CD4-positive, alpha-beta memory T cell (primary cell): ENCODE measurements at regions of chr9 and their contacts with region 1.

Region 1: DNA sequence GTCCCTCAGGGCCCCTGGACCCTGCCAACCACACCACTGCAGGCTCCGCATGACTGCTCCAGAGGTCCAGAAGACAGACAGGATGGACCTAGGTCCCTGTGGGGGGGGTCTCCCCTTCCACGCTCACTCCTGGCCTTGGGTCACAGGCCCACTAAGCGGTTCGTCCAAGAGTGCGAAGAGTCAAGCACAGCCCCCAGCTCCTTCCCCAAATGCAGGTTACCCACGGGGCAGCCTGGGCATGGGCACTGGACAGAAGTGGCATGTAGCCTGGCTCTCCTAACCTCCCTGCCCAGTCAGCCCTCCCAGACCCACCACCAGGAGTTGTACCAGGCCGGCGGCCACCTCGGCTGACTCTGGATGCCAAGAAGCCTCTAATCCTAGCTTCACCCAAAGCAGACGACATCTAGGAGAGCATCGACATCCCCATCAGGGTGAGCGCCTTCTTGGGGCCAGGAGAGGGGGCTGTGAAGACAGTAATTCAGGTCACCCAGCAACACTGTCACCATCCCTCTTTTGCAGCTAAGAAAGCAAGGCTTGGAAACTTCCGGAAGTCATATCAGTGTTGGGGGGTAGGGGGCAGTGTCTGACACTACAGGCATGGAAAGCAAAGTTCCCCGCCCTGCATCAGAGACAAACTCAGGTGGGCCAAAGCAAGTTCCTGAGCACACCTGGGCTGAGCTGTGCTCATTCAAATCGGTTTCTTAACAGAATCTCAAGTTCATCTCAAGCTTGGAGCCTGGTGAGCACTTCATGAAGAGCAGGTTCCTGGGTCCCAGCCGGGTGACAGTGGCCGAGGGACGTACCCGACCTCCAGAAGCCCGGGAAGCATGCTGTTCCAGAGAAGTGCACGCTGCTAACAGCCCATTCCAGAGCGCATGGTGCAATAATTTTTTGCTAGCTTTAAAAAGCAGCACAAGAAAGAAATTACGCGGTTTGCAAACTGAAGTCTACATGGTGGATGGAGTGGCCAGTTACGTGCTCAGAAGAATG is 68.7 kb downstream of the SEMA4D start:
- DNase-seq: peak; percentile 66 to 86 (median 73)
- H3K4me3 ChIP-seq: no peak overlapping the region
- H3K4me3 Mint-ChIP-seq: peak overlapping the region in 5 of 8 donors; percentile 17 to 73 (median 53)
- H3K27ac ChIP-seq: peak overlapping the region; percentile 4
- H3K27ac Mint-ChIP-seq: peak overlapping the region; percentile 50 to 97 (median 86)
- H3K4me1 ChIP-seq: peaks cover 100% of the 10 kb centered on the region
- H3K4me1 Mint-ChIP-seq: peaks cover 62 to 100% (median 85%) of the 10 kb centered on the region in 4 donors
- H3K27me3 ChIP-seq: no peaks in the 10 kb centered on the region
- H3K27me3 Mint-ChIP-seq: no peaks in the 10 kb centered on the region

Region 2: DNA sequence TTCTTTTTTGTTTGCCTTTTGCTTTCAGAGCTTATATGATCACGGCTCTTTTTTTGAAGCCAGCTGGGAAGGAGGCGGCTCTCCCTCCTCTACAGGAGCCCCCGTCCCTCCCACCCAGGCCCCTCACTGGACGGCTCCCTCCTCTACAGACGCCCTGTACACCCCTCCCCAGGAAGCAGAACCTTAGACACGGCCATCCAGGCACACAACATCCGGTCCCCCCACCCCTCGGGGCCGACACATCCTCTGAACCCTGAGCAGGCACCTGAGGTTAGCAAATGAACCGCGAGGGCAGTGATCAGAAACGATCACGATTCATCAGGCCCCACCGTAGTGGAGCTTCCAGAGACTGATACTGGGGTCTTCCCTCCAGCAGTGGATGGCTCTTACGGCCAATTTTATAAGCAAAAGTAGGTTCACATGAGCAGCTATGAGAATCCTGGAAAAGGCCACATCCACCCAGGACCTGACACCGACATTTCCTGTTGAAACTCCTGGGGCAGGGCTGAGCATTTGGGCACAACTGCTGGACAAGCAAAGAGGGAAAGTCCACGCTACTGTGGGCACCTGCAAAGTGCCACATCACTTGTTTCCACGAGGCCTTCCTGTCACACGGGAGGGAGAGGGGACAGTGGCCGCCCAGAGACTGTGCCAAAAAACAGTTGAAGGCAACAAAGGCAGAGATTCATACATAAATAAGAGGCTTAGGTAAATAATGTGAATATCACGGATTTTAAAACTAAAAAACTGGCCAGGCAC is 10.1 kb before region 1 on chr9:
- CTCF ChIA-PET with region 1: interaction called, 16 read pairs
- POLR2A ChIA-PET with region 1: interaction called, 13 read pairs
- intact Hi-C with region 1: no loop called
- DNase-seq: peak; percentile 69 to 86 (median 75)
- H3K4me3 ChIP-seq: peak overlapping the region in 1 of 2 donors; percentile 48
- H3K4me3 Mint-ChIP-seq: peak overlapping the region; percentile 81 to 94 (median 84)
- H3K27ac ChIP-seq: peak overlapping the region; percentile 73
- H3K27ac Mint-ChIP-seq: peak overlapping the region; percentile 83 to 97 (median 97)
- H3K4me1 ChIP-seq: peaks cover 100% of the 10 kb centered on the region
- H3K4me1 Mint-ChIP-seq: peaks cover 69 to 99% (median 80%) of the 10 kb centered on the region in 4 donors
- H3K27me3 ChIP-seq: no peaks in the 10 kb centered on the region
- H3K27me3 Mint-ChIP-seq: no peaks in the 10 kb centered on the region

Region 3: GRCh38 chr9:89448381-89448780 is 19.2 kb after region 1 on chr9:
- CTCF ChIA-PET with region 1: interaction called, 18 read pairs
- POLR2A ChIA-PET with region 1: interaction called, 7 read pairs
- intact Hi-C with region 1: no loop called
- DNase-seq: peak in 1 of 5 donors; percentile 65
- H3K4me3 ChIP-seq: peak overlapping the region in 1 of 2 donors; percentile 13
- H3K4me3 Mint-ChIP-seq: peak overlapping the region in 7 of 8 donors; percentile 35 to 90 (median 70)
- H3K27ac ChIP-seq: peak overlapping the region; percentile 49
- H3K27ac Mint-ChIP-seq: peak overlapping the region; percentile 86 to 97 (median 92)
- H3K4me1 ChIP-seq: peaks cover 97% of the 10 kb centered on the region
- H3K4me1 Mint-ChIP-seq: peaks cover 78 to 96% (median 88%) of the 10 kb centered on the region in 4 donors
- H3K27me3 ChIP-seq: no peaks in the 10 kb centered on the region
- H3K27me3 Mint-ChIP-seq: no peaks in the 10 kb centered on the region

Region 4: DNA sequence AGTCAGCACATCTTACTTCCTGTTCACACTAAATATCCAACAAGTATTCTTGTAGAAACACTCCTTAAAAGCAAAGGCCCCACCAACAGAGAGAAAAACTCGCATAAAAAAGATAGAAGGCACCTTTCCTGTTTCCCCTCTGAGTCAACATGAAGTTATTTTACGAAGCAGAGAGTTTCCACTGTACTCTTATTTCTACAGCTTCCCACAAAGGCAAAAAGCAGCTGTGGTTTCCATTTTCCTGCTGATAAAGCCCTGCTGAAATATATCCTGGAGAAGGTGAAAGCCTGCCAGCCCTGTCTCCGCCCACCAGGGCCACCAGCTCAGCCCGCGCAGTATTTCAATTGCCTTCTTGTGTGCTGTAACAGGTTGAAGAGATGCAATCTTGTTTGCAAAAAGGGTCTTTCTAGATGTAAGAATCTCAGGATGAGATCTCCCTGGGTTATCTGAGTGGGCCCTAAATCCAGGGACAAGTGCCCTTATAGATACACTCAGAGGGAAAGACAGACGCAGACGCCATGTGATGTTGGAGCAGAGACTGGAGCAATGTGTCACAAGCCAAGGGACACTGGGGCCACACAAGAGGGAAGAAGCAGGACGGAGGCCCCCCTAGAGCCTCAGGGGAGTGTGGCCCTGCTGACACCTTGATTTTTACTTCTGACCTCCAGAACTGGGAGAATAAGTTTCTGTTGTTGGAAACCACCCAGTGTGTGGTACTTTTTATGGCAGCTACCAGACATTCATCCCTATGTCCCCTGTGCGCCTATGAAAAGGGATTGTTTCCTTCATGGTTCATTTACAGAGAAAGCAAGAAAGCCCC is 48.8 kb after region 1 on chr9:
- CTCF ChIA-PET with region 1: interaction called, 10 read pairs
- POLR2A ChIA-PET with region 1: interaction called, 13 read pairs
- intact Hi-C with region 1: no loop called
- DNase-seq: peak; percentile 50 to 80 (median 53)
- H3K4me3 ChIP-seq: peak overlapping the region; percentile 52 to 57
- H3K4me3 Mint-ChIP-seq: peak overlapping the region; percentile 77 to 91 (median 86)
- H3K27ac ChIP-seq: peak overlapping the region; percentile 75
- H3K27ac Mint-ChIP-seq: peak overlapping the region; percentile 85 to 97 (median 96)
- H3K4me1 ChIP-seq: peaks cover 88% of the 10 kb centered on the region
- H3K4me1 Mint-ChIP-seq: peaks cover 72 to 94% (median 85%) of the 10 kb centered on the region in 4 donors
- H3K27me3 ChIP-seq: no peaks in the 10 kb centered on the region
- H3K27me3 Mint-ChIP-seq: no peaks in the 10 kb centered on the region

Region 5: DNA sequence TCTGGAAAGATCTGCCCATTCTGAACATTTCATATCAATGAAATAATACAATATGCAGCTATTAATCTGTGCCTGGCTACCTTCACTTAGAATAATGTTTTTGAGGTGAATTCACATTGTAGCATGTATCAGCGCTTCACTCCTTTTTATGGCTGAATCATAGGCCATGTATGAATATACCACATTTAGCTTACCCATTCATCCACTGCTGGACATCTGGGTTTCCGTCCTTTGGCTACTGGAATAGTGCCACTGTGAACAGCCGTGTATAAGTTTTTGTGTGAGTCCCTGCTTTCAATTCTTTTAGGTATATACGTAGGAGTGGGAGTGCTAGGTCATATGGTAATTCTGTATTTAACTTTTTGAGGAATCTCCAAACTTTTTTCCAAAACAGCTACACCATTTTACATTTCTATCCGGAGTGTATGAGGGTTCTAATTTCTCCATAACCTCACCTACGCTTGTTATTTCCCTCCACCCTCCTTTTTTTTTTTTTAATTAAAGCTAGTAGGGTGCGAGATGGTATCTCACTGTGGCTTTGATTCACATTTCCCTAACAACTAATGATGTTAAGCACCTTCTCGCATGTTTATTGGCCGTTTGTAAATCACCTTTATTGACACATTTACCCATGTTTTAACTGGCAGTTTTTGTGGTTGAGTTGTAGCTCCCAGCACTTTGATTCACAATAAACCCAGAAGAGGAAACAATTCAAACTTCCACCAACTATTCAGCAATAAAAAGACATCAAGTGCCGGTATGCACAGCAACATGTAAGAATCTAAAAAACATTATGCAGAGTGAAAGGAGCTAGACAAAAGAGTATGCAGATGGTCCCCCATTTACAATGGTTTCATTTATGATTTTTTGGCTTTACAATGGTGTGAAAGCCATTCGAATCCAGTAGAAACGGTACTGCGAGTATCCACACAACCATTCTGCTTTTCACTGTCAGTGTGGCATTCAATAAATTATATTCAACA is 60.6 kb after region 1 on chr9:
- CTCF ChIA-PET with region 1: interaction called, 16 read pairs
- POLR2A ChIA-PET with region 1: interaction called, 10 read pairs
- intact Hi-C with region 1: loop called (anchors 5 kb)
- DNase-seq: peak; percentile 71 to 86 (median 83)
- H3K4me3 ChIP-seq: peak overlapping the region; percentile 19 to 20
- H3K4me3 Mint-ChIP-seq: peak overlapping the region; percentile 68 to 100 (median 92)
- H3K27ac ChIP-seq: peak overlapping the region; percentile 72
- H3K27ac Mint-ChIP-seq: peak overlapping the region; percentile 74 to 99 (median 88)
- H3K4me1 ChIP-seq: peaks cover 97% of the 10 kb centered on the region
- H3K4me1 Mint-ChIP-seq: peaks cover 87 to 100% (median 93%) of the 10 kb centered on the region in 4 donors
- H3K27me3 ChIP-seq: no peaks in the 10 kb centered on the region
- H3K27me3 Mint-ChIP-seq: no peaks in the 10 kb centered on the region